Naive thymus-derived CD4-positive, alpha-beta T cell (primary cell): ENCODE measurements at regions of chr4 and their contacts with region 1.

Region 1: GRCh38 chr4:74623041-74623440 is 171.3 kb downstream of the BTC start:
- DNase-seq: peak in 6 of 9 donors; percentile 4 to 47 (median 34)
- ATAC-seq: peak; percentile 70
- H3K4me3 ChIP-seq: no peak overlapping the region
- H3K4me3 Mint-ChIP-seq: peak overlapping the region in 2 of 10 donors; percentile 0 to 29
- H3K27ac ChIP-seq: no peak overlapping the region
- H3K27ac Mint-ChIP-seq: peak overlapping the region in 2 of 9 donors; percentile 4 to 8
- H3K4me1 ChIP-seq: peaks cover 0 to 20% of the 10 kb centered on the region in 2 donors
- H3K4me1 Mint-ChIP-seq: peaks cover 7 to 48% (median 37%) of the 10 kb centered on the region in 7 donors
- H3K27me3 ChIP-seq: no peaks in the 10 kb centered on the region
- H3K27me3 Mint-ChIP-seq: peaks cover 0 to 5% (median 0%) of the 10 kb centered on the region in 5 donors

Region 2: GRCh38 chr4:74157561-74158465 is 465.2 kb before region 1 on chr4 and contains the start of gene MTHFD2L:
- CTCF ChIA-PET with region 1: no interaction called
- POLR2A ChIA-PET with region 1: no interaction called
- intact Hi-C with region 1: loop called in 1 of 2 experiments (anchors 5 kb)
- DNase-seq: peak; percentile 68 to 88 (median 75)
- ATAC-seq: peak; percentile 97
- H3K4me3 ChIP-seq: peak within 1 kb of the TSS; percentile 68
- H3K4me3 Mint-ChIP-seq: peak within 1 kb of the TSS; percentile 86 to 95 (median 90)
- H3K27ac ChIP-seq: peak within 1 kb of the TSS; percentile 78
- H3K27ac Mint-ChIP-seq: peak within 1 kb of the TSS; percentile 62 to 96 (median 90)
- H3K4me1 ChIP-seq: peaks cover 6 to 9% of the 10 kb centered on the region in 2 donors
- H3K4me1 Mint-ChIP-seq: peaks cover 10 to 48% (median 26%) of the 10 kb centered on the region in 7 donors
- H3K27me3 ChIP-seq: no peaks in the 10 kb centered on the region
- H3K27me3 Mint-ChIP-seq: peaks cover 0 to 30% (median 0%) of the 10 kb centered on the region in 5 donors
- total RNA-seq, gene MTHFD2L: 7.5 to 13.7 (median 10.4) TPM

Region 3: GRCh38 chr4:74228691-74229640 is 394.1 kb before region 1 on chr4:
- CTCF ChIA-PET with region 1: interaction called, 4 read pairs
- POLR2A ChIA-PET with region 1: no interaction called
- intact Hi-C with region 1: loop called in 1 of 2 experiments (anchors 1 kb)
- DNase-seq: peak; percentile 37 to 79 (median 68)
- ATAC-seq: peak; percentile 76
- H3K4me3 ChIP-seq: no peak overlapping the region
- H3K4me3 Mint-ChIP-seq: no peak overlapping the region
- H3K27ac ChIP-seq: no peak overlapping the region
- H3K27ac Mint-ChIP-seq: peak overlapping the region in 1 of 9 donors; percentile 15
- H3K4me1 ChIP-seq: no peaks in the 10 kb centered on the region
- H3K4me1 Mint-ChIP-seq: peaks cover 0 to 7% (median 0%) of the 10 kb centered on the region in 7 donors
- H3K27me3 ChIP-seq: no peaks in the 10 kb centered on the region
- H3K27me3 Mint-ChIP-seq: no peaks in the 10 kb centered on the region

Region 4: GRCh38 chr4:74311696-74312313 is 311.2 kb before region 1 on chr4:
- CTCF ChIA-PET with region 1: no interaction called
- POLR2A ChIA-PET with region 1: no interaction called
- intact Hi-C with region 1: loop called in 1 of 2 experiments (anchors 5 kb)
- DNase-seq: peak in 7 of 9 donors; percentile 27 to 57 (median 48)
- ATAC-seq: peak; percentile 63
- H3K4me3 ChIP-seq: no peak overlapping the region
- H3K4me3 Mint-ChIP-seq: no peak overlapping the region
- H3K27ac ChIP-seq: no peak overlapping the region
- H3K27ac Mint-ChIP-seq: no peak overlapping the region
- H3K4me1 ChIP-seq: peaks cover 0 to 11% of the 10 kb centered on the region in 2 donors
- H3K4me1 Mint-ChIP-seq: peaks cover 7 to 20% (median 17%) of the 10 kb centered on the region in 7 donors
- H3K27me3 ChIP-seq: no peaks in the 10 kb centered on the region
- H3K27me3 Mint-ChIP-seq: no peaks in the 10 kb centered on the region

Region 5: GRCh38 chr4:74376888-74377483 is 246.1 kb before region 1 on chr4:
- CTCF ChIA-PET with region 1: interaction called, 6 read pairs
- POLR2A ChIA-PET with region 1: no interaction called
- intact Hi-C with region 1: loop called (anchors 1 kb)
- DNase-seq: peak in 7 of 9 donors; percentile 25 to 60 (median 48)
- ATAC-seq: peak; percentile 73
- H3K4me3 ChIP-seq: no peak overlapping the region
- H3K4me3 Mint-ChIP-seq: no peak overlapping the region
- H3K27ac ChIP-seq: no peak overlapping the region
- H3K27ac Mint-ChIP-seq: no peak overlapping the region
- H3K4me1 ChIP-seq: no peaks in the 10 kb centered on the region
- H3K4me1 Mint-ChIP-seq: no peaks in the 10 kb centered on the region
- H3K27me3 ChIP-seq: no peaks in the 10 kb centered on the region
- H3K27me3 Mint-ChIP-seq: peaks cover 0 to 16% (median 8%) of the 10 kb centered on the region in 5 donors

Region 6: DNA sequence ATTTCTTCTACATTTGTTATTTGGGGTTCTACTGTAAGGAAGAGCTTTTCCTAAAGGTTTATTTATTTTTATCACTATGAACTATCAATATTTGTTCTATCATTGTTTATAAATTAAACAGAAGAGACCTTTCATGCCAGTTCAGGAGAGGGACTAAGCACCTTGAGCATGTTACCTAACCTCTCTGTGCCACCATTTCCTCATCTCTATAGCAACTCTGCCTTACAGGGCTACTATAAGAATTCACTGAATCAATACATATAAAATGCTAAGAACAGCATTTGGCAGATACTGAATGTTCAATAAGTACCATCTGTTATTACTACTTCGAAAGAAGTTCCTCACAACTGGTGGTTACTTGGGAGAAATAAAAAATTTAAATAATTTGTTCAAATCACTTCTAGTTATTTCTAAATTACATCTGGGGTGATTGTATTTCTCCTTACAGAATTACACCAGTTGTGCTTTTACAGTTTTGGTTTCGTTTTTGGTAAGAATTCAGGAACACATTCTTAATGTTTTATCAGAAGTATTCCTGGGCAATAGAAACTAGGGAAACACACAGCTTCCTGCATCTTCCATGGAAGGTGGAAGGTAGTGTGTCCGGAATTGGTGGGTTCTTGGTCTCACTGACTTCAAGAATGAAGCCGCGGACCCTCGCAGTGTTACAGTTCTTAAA is 225.2 kb before region 1 on chr4:
- CTCF ChIA-PET with region 1: interaction called, 3 read pairs
- POLR2A ChIA-PET with region 1: no interaction called
- intact Hi-C with region 1: loop called in 1 of 2 experiments (anchors 5 kb)
- DNase-seq: peak in 4 of 9 donors; percentile 10 to 58 (median 38)
- ATAC-seq: peak; percentile 78
- H3K4me3 ChIP-seq: peak overlapping the region; percentile 76
- H3K4me3 Mint-ChIP-seq: peak overlapping the region; percentile 89 to 99 (median 96)
- H3K27ac ChIP-seq: peak overlapping the region; percentile 83
- H3K27ac Mint-ChIP-seq: peak overlapping the region; percentile 92 to 99 (median 97)
- H3K4me1 ChIP-seq: no peaks in the 10 kb centered on the region
- H3K4me1 Mint-ChIP-seq: peaks cover 0 to 19% (median 11%) of the 10 kb centered on the region in 7 donors
- H3K27me3 ChIP-seq: no peaks in the 10 kb centered on the region
- H3K27me3 Mint-ChIP-seq: peaks cover 0 to 5% (median 0%) of the 10 kb centered on the region in 5 donors

Region 7: DNA sequence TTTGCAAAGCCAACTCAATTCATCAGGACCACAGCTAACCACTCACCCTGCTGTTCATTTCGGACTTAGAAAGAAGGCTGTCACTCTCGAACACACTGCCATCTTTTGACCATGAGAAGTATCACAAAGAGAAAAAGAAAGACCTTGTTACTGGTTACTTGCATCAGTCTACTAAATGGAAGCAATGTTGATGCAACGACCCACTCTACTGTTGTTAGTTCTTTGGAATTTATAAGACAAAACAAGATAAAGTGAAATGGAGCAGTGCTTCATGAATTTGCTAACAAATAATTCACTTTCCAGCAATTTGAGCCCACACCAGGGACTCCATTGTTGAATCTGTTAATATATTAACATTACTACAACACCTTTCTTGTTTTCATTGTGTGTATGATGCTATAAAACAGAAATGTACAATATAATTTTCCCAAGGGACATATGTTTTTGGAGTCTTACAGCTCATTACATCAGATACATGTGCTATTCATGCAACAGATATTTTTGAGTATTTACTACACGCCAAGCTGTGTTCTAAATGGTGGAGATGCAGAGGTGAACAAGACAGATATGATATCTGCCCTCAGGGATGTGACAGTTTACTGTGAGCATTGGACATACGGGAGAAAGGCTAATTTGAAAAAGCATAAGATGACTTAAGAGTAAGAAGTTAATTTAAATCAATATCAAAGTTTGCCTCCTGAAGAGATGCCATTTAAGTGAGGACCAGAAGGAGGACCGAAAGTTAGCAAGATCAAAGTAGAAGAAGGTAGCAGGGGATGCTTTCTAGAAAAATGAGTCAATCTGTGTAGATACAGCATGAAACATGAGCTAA is 90.9 kb before region 1 on chr4:
- CTCF ChIA-PET with region 1: no interaction called
- POLR2A ChIA-PET with region 1: no interaction called
- intact Hi-C with region 1: loop called (anchors 5 kb)
- DNase-seq: peak in 6 of 9 donors; percentile 2 to 34 (median 24)
- ATAC-seq: peak; percentile 74
- H3K4me3 ChIP-seq: no peak overlapping the region
- H3K4me3 Mint-ChIP-seq: no peak overlapping the region
- H3K27ac ChIP-seq: no peak overlapping the region
- H3K27ac Mint-ChIP-seq: no peak overlapping the region
- H3K4me1 ChIP-seq: no peaks in the 10 kb centered on the region
- H3K4me1 Mint-ChIP-seq: peaks cover 0 to 2% (median 0%) of the 10 kb centered on the region in 7 donors
- H3K27me3 ChIP-seq: no peaks in the 10 kb centered on the region
- H3K27me3 Mint-ChIP-seq: peaks cover 0 to 22% (median 11%) of the 10 kb centered on the region in 5 donors

Region 8: DNA sequence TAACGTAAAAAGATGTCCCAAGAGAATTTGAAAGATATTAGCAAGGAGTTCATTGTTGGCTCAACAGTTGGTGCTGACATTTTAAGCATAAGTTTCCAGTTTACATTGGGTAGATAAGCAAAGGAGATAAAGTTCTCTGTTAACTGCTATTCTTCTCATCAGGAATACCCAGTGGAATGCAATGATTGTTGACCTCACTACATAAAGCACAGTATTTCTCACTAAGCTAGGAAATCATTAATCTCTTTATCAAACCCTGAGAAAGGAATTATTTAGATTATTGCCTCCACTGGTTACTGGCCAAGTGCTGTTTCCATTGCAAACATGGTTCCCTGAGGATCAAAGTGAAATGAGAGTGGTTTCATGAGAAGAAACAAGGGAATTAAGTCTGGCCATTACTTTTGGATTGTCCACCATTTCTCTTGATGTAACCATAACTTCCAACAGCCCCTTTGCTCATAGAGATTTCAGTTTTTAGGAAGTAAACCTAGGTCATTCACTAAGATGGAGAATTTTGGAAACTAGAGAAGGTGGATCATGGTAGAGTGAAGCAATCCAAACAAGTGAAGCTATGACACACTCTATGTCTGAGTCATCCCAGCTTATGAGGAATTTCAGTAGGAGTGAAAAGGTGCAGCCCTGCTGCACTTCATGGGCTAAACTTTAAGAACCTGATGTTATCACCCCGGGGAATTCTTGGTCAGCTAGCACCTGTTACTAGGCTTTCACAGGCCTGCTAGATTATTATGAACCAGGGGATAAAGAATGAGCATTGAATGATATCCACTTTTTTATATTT is 14.7 kb before region 1 on chr4:
- CTCF ChIA-PET with region 1: no interaction called
- POLR2A ChIA-PET with region 1: no interaction called
- intact Hi-C with region 1: no loop called
- DNase-seq: no peak
- ATAC-seq: no peak
- H3K4me3 ChIP-seq: no peak overlapping the region
- H3K4me3 Mint-ChIP-seq: no peak overlapping the region
- H3K27ac ChIP-seq: no peak overlapping the region
- H3K27ac Mint-ChIP-seq: no peak overlapping the region
- H3K4me1 ChIP-seq: no peaks in the 10 kb centered on the region
- H3K4me1 Mint-ChIP-seq: no peaks in the 10 kb centered on the region
- H3K27me3 ChIP-seq: no peaks in the 10 kb centered on the region
- H3K27me3 Mint-ChIP-seq: peaks cover 0 to 7% (median 0%) of the 10 kb centered on the region in 5 donors